ENCODE measurements at regions of chr3 and their contacts with region 1.

Region 1: GRCh38 chr3:170724599-170725280 is 138.9 kb upstream of the SLC7A14 start:
- DNase-seq: no peak

Region 2: GRCh38 chr3:170768334-170768801 is 43.6 kb after region 1 on chr3:
- intact Hi-C with region 1: loop called in 1 of 2 experiments (anchors 2 kb)
- DNase-seq: no peak

Measured in posterior vena cava (tissue), 2 donors.